Psoas muscle (tissue), 8 donors: ENCODE measurements at regions of chr7 and their contacts with region 1.

Region 1: GRCh38 chr7:127392566-127393367 is at the start of gene ZNF800:
- DNase-seq: peak; percentile 90 to 95
- ATAC-seq: peak; percentile 97 to 99 (median 98)
- H3K4me3 ChIP-seq: peak within 1 kb of the TSS; percentile 93
- H3K27ac ChIP-seq: peak within 1 kb of the TSS; percentile 99
- H3K4me1 ChIP-seq: peaks cover 23% of the 10 kb centered on the region
- H3K27me3 ChIP-seq: no peaks in the 10 kb centered on the region
- CTCF ChIP-seq: no peak
- total RNA-seq, gene ZNF800: 26.6 to 33.6 (median 28.7) TPM

Region 2: DNA sequence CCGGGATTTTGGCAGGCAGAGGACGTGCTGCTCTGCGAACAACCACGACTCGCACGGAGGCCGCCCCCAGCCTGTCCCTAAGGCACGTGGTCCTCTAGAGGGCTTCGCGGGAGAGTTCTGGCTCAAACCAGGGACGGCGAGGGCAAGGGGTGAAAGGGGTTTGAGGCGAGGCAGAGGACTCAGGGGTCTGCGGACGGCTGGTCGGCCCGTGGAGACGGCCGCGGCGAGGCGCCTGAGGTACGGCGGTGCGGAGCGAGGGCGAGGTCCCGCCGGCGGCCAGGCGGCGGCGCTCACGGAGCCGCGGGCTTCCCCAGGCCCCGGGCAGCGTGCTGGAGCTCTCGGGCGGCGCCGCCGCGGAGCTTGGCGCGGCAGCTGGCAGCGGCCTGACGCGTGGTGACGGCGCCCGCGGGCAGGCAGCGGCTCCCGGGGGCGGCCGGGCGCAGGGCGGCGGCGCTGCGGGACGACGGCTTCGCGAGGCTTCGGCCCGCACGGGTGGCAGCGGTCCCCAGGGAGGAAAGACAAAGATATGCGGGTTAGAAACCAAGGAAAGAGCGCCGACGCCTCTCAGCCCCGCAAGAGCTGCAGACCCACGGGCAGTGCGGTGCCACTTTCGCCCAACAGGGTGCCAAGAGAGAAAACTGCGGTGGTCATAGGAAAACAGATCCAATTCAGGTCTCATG is 45.1 kb before region 1 on chr7:
- intact Hi-C with region 1: loop called in 1 of 2 experiments (anchors 5 kb)
- DNase-seq: peak; percentile 66 to 74
- ATAC-seq: peak; percentile 89 to 98 (median 96)
- H3K4me3 ChIP-seq: peak overlapping the region; percentile 58
- H3K27ac ChIP-seq: no peak overlapping the region
- H3K4me1 ChIP-seq: no peaks in the 10 kb centered on the region
- H3K27me3 ChIP-seq: no peaks in the 10 kb centered on the region
- CTCF ChIP-seq: peak; percentile 64

Region 3: GRCh38 chr7:127460077-127460476 is 67.3 kb after region 1 on chr7:
- intact Hi-C with region 1: no loop called
- DNase-seq: no peak
- ATAC-seq: no peak
- H3K4me3 ChIP-seq: no peak overlapping the region
- H3K27ac ChIP-seq: no peak overlapping the region
- H3K4me1 ChIP-seq: no peaks in the 10 kb centered on the region
- H3K27me3 ChIP-seq: no peaks in the 10 kb centered on the region
- CTCF ChIP-seq: no peak

Region 4: GRCh38 chr7:127585044-127585953 is 192.5 kb after region 1 on chr7 and contains the start of gene GCC1:
- intact Hi-C with region 1: loop called (anchors 5 kb)
- DNase-seq: peak; percentile 92 to 96
- ATAC-seq: peak; percentile 82 to 89 (median 86)
- H3K4me3 ChIP-seq: peak within 1 kb of the TSS; percentile 78
- H3K27ac ChIP-seq: peak within 1 kb of the TSS; percentile 92
- H3K4me1 ChIP-seq: peaks cover 60% of the 10 kb centered on the region
- H3K27me3 ChIP-seq: no peaks in the 10 kb centered on the region
- CTCF ChIP-seq: no peak
- total RNA-seq, gene GCC1: 8.2 to 12.4 (median 9.3) TPM

Region 5: GRCh38 chr7:127638197-127638755 is 245.5 kb after region 1 on chr7:
- intact Hi-C with region 1: no loop called
- DNase-seq: no peak
- ATAC-seq: no peak
- H3K4me3 ChIP-seq: no peak overlapping the region
- H3K27ac ChIP-seq: no peak overlapping the region
- H3K4me1 ChIP-seq: no peaks in the 10 kb centered on the region
- H3K27me3 ChIP-seq: peaks cover 0 to 18% (median 0%) of the 10 kb centered on the region in 3 donors
- CTCF ChIP-seq: no peak

Region 6: GRCh38 chr7:127651556-127652332 is 259.0 kb after region 1 on chr7 and contains the start of gene SND1:
- intact Hi-C with region 1: loop called in 1 of 2 experiments (anchors 5 kb)
- DNase-seq: peak; percentile 99
- ATAC-seq: peak; percentile 95 to 97 (median 96)
- H3K4me3 ChIP-seq: peak within 1 kb of the TSS; percentile 81
- H3K27ac ChIP-seq: peak within 1 kb of the TSS; percentile 99
- H3K4me1 ChIP-seq: peaks cover 30% of the 10 kb centered on the region
- H3K27me3 ChIP-seq: no peaks in the 10 kb centered on the region
- CTCF ChIP-seq: no peak
- total RNA-seq, gene SND1: 46.2 to 71.6 (median 53.4) TPM